Upper lobe of right lung (tissue), 1 donor: ENCODE measurements at regions of chr18 and their contacts with region 1.

Region 1: GRCh38 chr18:5879479-5879882 is 15.8 kb downstream of the TMEM200C start:
- DNase-seq: no peak
- ATAC-seq: peak; percentile 58
- H3K4me3 ChIP-seq: no peak overlapping the region
- H3K27ac ChIP-seq: no peak overlapping the region
- H3K4me1 ChIP-seq: no peaks in the 10 kb centered on the region
- H3K27me3 ChIP-seq: peaks cover 13% of the 10 kb centered on the region
- CTCF ChIP-seq: peak; percentile 77

Region 2: GRCh38 chr18:6476190-6476589 is 596.7 kb after region 1 on chr18:
- intact Hi-C with region 1: loop called (anchors 10 kb)
- DNase-seq: no peak
- ATAC-seq: no peak
- H3K4me3 ChIP-seq: no peak overlapping the region
- H3K27ac ChIP-seq: no peak overlapping the region
- H3K4me1 ChIP-seq: no peaks in the 10 kb centered on the region
- H3K27me3 ChIP-seq: no peaks in the 10 kb centered on the region
- CTCF ChIP-seq: no peak

Region 3: GRCh38 chr18:6509832-6510231 is 630.4 kb after region 1 on chr18:
- intact Hi-C with region 1: loop called (anchors 10 kb)
- DNase-seq: no peak
- ATAC-seq: no peak
- H3K4me3 ChIP-seq: no peak overlapping the region
- H3K27ac ChIP-seq: no peak overlapping the region
- H3K4me1 ChIP-seq: no peaks in the 10 kb centered on the region
- H3K27me3 ChIP-seq: no peaks in the 10 kb centered on the region
- CTCF ChIP-seq: no peak

Region 4: DNA sequence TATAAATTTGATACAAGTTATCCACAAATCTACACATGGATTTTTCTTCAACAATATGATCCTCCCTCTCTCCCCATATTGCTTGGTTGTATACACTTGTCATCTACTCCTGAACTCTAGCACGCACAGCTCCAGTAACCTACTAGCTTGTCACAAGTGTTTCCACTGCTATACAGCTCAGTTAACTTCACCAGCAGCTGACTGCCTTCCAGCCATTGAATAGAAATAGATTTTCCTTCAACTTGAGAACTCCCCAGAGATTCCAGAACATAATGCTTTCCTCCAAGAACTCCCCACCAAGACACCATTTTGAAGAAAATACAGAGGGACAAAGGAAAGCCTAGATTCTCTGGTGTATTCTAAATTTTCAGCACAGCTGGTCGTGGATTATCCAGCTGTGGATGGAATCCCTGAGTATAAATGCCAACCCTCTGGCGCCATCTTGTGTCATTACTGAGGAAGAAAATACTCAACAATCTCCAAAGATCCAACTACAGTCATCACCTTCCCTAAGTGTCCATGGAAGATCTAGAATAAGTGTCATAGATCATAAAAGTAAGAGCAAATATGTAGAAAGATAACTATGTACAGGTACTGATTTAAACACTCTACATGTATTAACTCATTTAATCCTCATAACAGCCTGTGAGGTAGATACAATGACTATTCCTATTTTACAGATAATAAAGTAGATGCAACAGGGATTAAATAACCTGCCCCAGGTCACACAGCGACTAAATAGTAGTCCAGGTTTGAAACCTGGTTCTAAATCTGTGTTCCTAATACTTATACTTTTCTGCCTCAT is 1006.7 kb after region 1 on chr18:
- intact Hi-C with region 1: loop called (anchors 10 kb)
- DNase-seq: no peak
- ATAC-seq: peak; percentile 80
- H3K4me3 ChIP-seq: no peak overlapping the region
- H3K27ac ChIP-seq: no peak overlapping the region
- H3K4me1 ChIP-seq: peaks cover 4% of the 10 kb centered on the region
- H3K27me3 ChIP-seq: no peaks in the 10 kb centered on the region
- CTCF ChIP-seq: peak; percentile 72